ENCODE measurements at regions of chr19 and their contacts with region 1.

Region 1: GRCh38 chr19:45439569-45440254 is 16.0 kb upstream of the ERCC1 start:
- DNase-seq: peak; percentile 80
- H3K4me3 Mint-ChIP-seq: peak overlapping the region; percentile 71
- H3K27ac Mint-ChIP-seq: peak overlapping the region; percentile 78
- H3K4me1 Mint-ChIP-seq: peaks cover 34% of the 10 kb centered on the region
- H3K27me3 Mint-ChIP-seq: no peaks in the 10 kb centered on the region

Region 2: GRCh38 chr19:45423589-45424190 is 16.0 kb before region 1 on chr19 and contains the start of gene ERCC1:
- CTCF ChIA-PET with region 1: interaction called, 31 read pairs
- POLR2A ChIA-PET with region 1: no interaction called
- DNase-seq: peak; percentile 89
- H3K4me3 Mint-ChIP-seq: peak within 1 kb of the TSS; percentile 85
- H3K27ac Mint-ChIP-seq: peak within 1 kb of the TSS; percentile 86
- H3K4me1 Mint-ChIP-seq: peaks cover 65% of the 10 kb centered on the region
- H3K27me3 Mint-ChIP-seq: peaks cover 7% of the 10 kb centered on the region
- total RNA-seq, gene ERCC1: 59.9 to 66.1 TPM

Region 3: DNA sequence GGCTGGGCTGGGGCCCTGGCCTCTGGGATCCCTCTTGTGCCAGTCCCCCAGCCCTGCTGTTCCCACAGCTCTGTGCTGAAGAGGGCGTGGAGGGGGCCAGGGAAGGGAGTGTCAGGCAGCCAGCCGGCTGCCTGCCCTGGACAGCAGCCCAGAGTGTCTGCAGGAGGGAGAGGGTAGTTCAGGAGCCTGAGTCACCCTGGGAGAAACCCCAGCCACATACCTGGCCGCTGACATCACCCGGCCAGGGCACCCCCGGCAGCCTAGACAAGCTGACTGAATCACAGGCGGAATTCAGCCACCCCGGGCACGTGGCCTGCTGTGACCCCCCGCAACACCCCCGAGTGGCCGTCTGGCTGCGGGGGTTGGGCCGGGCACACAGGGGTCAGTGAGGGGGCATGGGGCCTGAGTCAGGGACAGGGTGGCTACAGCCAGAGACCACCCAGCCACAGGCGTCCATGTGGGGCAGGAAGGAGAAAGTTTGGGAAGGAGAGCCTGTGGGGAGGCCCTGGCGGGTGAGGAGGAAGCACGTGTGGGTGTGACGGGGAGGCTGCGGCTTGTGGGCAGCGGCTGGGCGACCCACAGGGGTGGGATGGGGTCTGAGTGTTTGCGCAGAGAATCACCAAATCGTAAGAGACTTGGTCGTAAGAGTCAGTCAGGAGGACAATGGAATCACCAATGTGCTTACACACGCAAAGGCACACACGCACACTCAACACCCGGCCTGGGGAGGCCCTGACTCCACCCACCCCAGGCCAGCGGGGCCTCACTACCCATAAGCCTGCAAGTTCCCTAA is 16.2 kb after region 1 on chr19:
- CTCF ChIA-PET with region 1: interaction called, 18 read pairs
- POLR2A ChIA-PET with region 1: no interaction called
- DNase-seq: no peak
- H3K4me3 Mint-ChIP-seq: no peak overlapping the region
- H3K27ac Mint-ChIP-seq: no peak overlapping the region
- H3K4me1 Mint-ChIP-seq: peaks cover 28% of the 10 kb centered on the region
- H3K27me3 Mint-ChIP-seq: peaks cover 4% of the 10 kb centered on the region

Region 4: GRCh38 chr19:45478454-45479238 is 38.9 kb after region 1 on chr19:
- CTCF ChIA-PET with region 1: interaction called, 310 read pairs
- POLR2A ChIA-PET with region 1: interaction called, 12 read pairs
- DNase-seq: peak; percentile 91
- H3K4me3 Mint-ChIP-seq: peak overlapping the region; percentile 81
- H3K27ac Mint-ChIP-seq: peak overlapping the region; percentile 98
- H3K4me1 Mint-ChIP-seq: peaks cover 44% of the 10 kb centered on the region
- H3K27me3 Mint-ChIP-seq: peaks cover 30% of the 10 kb centered on the region

Region 5: GRCh38 chr19:45558399-45558878 is 118.7 kb after region 1 on chr19:
- CTCF ChIA-PET with region 1: interaction called, 16 read pairs
- POLR2A ChIA-PET with region 1: no interaction called
- DNase-seq: peak; percentile 83
- H3K4me3 Mint-ChIP-seq: no peak overlapping the region
- H3K27ac Mint-ChIP-seq: no peak overlapping the region
- H3K4me1 Mint-ChIP-seq: peaks cover 24% of the 10 kb centered on the region
- H3K27me3 Mint-ChIP-seq: no peaks in the 10 kb centered on the region

Measured in activated CD4-positive, alpha-beta T cell treated with anti-CD3 and anti-CD28 coated beads, Interleukin-2, amount 10 ng/mL, durations not matched to agents 7 days and 5 days (primary cell).